Body of pancreas (tissue), 4 donors: ENCODE measurements at regions of chr12 and their contacts with region 1.

Region 1: DNA sequence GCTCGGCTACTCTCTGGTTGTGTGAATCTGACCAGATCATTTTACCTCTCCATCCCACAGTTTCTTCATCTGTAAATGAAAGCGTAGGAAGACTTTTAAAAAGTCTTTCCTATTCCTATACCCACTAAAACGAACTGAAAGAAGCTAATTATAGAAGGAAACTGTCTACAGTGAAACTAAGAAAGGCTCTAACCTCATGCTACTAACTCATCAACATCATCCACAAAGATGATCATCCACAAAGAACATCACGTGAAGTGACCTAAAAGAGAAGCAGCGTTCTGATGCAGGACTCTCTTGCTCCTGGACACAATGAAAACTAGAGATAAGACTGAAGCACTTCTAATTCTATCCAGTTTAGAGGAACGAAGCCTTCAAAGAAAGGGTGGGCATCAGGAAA is 58.5 kb upstream of the OSBPL8 start:
- DNase-seq: no peak
- ATAC-seq: no peak
- H3K4me3 ChIP-seq: no peak overlapping the region
- H3K27ac ChIP-seq: no peak overlapping the region
- H3K4me1 ChIP-seq: peaks cover 10% of the 10 kb centered on the region
- H3K27me3 ChIP-seq: no peaks in the 10 kb centered on the region
- CTCF ChIP-seq: no peak
- POLR2A ChIP-seq: no peak

Region 2: GRCh38 chr12:76583301-76583700 is 34.7 kb before region 1 on chr12:
- intact Hi-C with region 1: no loop called
- DNase-seq: no peak
- ATAC-seq: no peak
- H3K4me3 ChIP-seq: no peak overlapping the region
- H3K27ac ChIP-seq: no peak overlapping the region
- H3K4me1 ChIP-seq: no peaks in the 10 kb centered on the region
- H3K27me3 ChIP-seq: no peaks in the 10 kb centered on the region
- CTCF ChIP-seq: no peak
- POLR2A ChIP-seq: no peak

Region 3: GRCh38 chr12:76790564-76791552 is 172.8 kb after region 1 on chr12:
- intact Hi-C with region 1: loop called (anchors 5 kb)
- DNase-seq: no peak
- ATAC-seq: peak; percentile 70
- H3K4me3 ChIP-seq: no peak overlapping the region
- H3K27ac ChIP-seq: peak overlapping the region in 1 of 4 donors; percentile 7
- H3K4me1 ChIP-seq: peaks cover 25% of the 10 kb centered on the region
- H3K27me3 ChIP-seq: no peaks in the 10 kb centered on the region
- CTCF ChIP-seq: peak; percentile 32 to 78 (median 71)
- POLR2A ChIP-seq: no peak

Region 4: GRCh38 chr12:76952995-76953394 is 335.0 kb after region 1 on chr12:
- intact Hi-C with region 1: no loop called
- DNase-seq: no peak
- ATAC-seq: no peak
- H3K4me3 ChIP-seq: no peak overlapping the region
- H3K27ac ChIP-seq: no peak overlapping the region
- H3K4me1 ChIP-seq: no peaks in the 10 kb centered on the region
- H3K27me3 ChIP-seq: no peaks in the 10 kb centered on the region
- CTCF ChIP-seq: no peak
- POLR2A ChIP-seq: no peak

Region 5: DNA sequence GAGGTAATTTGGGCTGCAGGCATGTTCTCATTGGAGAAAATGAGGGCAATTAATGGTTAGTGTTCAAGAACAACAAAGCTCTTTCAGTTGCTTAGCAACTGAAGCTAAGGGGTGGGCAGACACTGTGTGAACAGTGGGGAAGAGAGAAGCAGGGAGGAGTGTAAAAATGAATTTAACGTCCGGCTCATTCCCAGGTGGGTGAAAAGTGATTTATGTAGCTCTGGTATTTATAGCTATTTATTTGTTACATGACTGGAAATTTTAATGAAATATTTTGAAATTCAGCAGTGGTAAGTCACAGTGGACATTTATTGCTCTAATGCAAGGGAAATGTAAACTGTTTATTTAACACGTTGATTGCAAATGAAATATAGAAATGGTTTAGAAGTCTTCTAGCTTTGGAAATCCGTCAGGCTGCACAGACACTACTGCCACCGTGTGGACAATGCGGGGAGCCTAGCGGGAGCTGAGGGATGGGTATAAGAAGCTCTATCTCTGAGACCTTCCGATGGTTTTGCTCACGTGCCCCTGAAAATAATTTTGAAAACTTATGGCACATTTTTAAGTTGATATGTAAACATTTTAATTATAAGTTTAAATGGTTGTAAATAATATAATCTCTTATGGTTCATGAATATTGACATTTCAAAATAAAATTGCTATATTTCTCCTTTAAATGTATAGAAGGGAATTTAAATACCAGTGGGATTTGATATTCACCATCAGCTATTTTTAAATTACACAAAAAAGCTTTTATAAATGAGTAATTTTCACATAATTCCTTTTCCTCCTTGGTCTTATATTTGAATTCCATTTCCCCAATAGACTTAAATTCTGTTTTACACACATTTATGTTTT is 392.9 kb after region 1 on chr12:
- intact Hi-C with region 1: loop called (anchors 5 kb)
- DNase-seq: peak; percentile 63 to 74 (median 67)
- ATAC-seq: peak; percentile 79
- H3K4me3 ChIP-seq: no peak overlapping the region
- H3K27ac ChIP-seq: no peak overlapping the region
- H3K4me1 ChIP-seq: peaks cover 6% of the 10 kb centered on the region
- H3K27me3 ChIP-seq: no peaks in the 10 kb centered on the region
- CTCF ChIP-seq: peak; percentile 72 to 98 (median 76)
- POLR2A ChIP-seq: no peak